Thyroid gland (tissue), 4 donors: ENCODE measurements at regions of chr17 and their contacts with region 1.

Region 1: DNA sequence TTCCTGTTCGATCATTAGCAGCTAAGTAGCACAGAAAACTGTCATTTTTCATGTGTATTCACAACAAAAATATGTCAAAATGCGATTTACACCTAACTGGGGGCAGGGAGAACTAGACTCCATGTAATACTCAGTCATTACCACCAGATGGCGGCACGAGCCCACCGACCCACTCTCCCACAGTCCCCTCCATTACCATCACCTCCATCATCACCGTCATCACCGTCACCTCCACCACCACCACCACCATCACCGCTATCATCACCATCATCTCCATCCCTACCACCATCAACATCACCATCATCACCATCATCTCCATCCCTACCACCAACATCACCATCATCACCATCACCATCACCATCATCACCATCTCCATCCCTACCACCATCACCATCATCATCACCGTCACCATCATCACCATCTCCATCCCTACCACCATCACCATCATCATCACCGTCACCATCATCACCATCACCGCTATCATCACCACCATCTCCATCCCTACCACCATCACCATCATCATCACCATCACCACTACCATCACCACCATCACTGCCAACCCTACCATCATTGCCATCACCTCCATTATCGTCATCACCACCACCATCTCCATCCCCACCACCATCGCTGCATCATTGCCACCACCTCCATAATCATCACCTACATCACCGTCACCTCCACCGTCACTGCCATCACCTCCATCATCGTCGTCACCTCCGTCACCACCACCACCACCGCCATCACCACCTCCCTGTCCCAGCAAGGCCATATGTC is 14.4 kb downstream of the NDUFAF8 start:
- DNase-seq: peak; percentile 40 to 43
- H3K4me3 ChIP-seq: no peak overlapping the region
- H3K27ac ChIP-seq: peak overlapping the region in 2 of 3 donors; percentile 98 to 99
- H3K4me1 ChIP-seq: peaks cover 31 to 33% of the 10 kb centered on the region in 2 donors
- H3K27me3 ChIP-seq: no peaks in the 10 kb centered on the region
- CTCF ChIP-seq: peak; percentile 63 to 97 (median 79)
- POLR2A ChIP-seq: no peak

Region 2: GRCh38 chr17:81207610-81208581 is 45.6 kb before region 1 on chr17:
- intact Hi-C with region 1: no loop called
- DNase-seq: no peak
- H3K4me3 ChIP-seq: no peak overlapping the region
- H3K27ac ChIP-seq: no peak overlapping the region
- H3K4me1 ChIP-seq: no peaks in the 10 kb centered on the region
- H3K27me3 ChIP-seq: no peaks in the 10 kb centered on the region
- CTCF ChIP-seq: no peak
- POLR2A ChIP-seq: no peak

Region 3: DNA sequence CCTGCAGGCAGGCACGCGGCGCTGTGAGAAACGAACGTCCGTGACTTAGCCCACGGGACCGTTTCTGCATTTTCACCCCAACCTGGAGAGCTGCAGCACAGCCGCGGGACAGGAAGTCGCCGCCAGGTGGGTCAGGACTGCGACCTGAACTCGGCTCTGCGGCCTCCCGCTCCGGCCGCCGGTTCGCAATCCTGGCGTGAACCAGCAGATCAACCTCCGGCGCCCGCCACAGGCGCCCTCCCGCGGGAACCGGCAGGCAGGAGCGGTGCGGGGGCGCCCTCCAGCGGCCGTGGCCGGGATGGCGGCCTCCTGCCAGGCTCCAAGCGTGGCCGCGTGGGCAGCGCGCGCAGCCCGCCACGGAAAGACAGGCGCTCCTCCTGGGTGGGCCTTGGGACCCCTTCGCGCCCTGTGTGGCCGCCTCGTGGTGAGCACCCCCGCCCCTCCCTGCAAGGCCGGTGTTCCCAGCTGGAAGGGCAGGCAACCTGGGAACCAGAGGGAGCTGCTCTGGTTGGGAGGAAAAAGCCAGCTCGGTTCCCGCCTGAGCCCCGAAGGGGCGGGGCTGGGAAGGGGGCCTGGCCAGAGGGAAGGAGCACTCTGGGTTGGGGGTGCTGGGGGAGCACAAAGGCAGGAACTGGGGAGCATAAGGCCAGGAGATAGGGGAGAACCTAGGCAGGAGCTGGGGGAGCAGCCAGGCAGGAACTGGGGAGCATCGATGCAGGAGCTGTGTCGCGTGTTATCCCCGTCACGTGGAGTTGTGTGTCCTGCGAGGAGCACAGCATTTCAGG is 230.8 kb after region 1 on chr17:
- intact Hi-C with region 1: loop called (anchors 2 kb)
- DNase-seq: peak; percentile 90 to 93
- H3K4me3 ChIP-seq: peak overlapping the region in 1 of 3 donors; percentile 8
- H3K27ac ChIP-seq: no peak overlapping the region
- H3K4me1 ChIP-seq: peaks cover 34 to 64% of the 10 kb centered on the region in 2 donors
- H3K27me3 ChIP-seq: no peaks in the 10 kb centered on the region
- CTCF ChIP-seq: peak; percentile 37 to 100 (median 100)
- POLR2A ChIP-seq: peak in 1 of 2 donors; percentile 14

Region 4: DNA sequence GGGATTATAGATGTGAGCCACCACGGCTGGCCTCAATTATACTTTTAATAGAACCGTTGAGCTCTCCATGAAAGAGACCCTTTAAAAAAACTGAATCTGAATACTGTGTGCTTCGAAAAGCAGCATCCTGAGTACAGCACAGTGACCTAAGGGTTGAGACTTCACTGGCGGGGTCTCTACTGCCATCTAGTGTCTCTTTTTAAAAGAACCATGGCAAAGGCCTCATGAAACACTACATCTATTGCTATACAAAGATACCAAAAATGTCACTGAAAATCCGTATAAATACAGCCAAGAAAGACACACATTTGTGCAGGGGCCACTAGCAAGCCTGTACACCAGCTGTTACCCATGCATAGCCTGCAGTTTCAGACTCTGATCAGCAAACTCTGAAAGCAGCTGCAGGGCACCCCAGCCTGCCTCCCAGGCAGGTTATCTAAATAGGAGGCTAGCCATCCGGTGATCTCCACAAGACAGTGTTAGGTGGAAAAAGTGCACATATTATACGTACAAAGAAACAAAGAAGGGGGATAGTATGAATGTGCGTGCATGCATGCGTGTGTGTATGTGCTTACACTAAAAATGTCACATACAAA is 348.1 kb after region 1 on chr17:
- intact Hi-C with region 1: loop called (anchors 5 kb)
- DNase-seq: peak; percentile 36 to 37
- H3K4me3 ChIP-seq: no peak overlapping the region
- H3K27ac ChIP-seq: no peak overlapping the region
- H3K4me1 ChIP-seq: no peaks in the 10 kb centered on the region
- H3K27me3 ChIP-seq: no peaks in the 10 kb centered on the region
- CTCF ChIP-seq: peak; percentile 48 to 86 (median 72)
- POLR2A ChIP-seq: no peak